Colonic mucosa (tissue), 4 donors: ENCODE measurements at regions of chr4 and their contacts with region 1.

Region 1: GRCh38 chr4:152849350-152849749 is 69.6 kb downstream of the ARFIP1 start:
- DNase-seq: no peak
- H3K4me3 ChIP-seq: no peak overlapping the region
- H3K27ac ChIP-seq: no peak overlapping the region
- H3K4me1 ChIP-seq: no peaks in the 10 kb centered on the region
- H3K27me3 ChIP-seq: no peaks in the 10 kb centered on the region
- CTCF ChIP-seq: no peak

Region 2: GRCh38 chr4:153127760-153128494 is 278.6 kb after region 1 on chr4:
- intact Hi-C with region 1: loop called (anchors 5 kb)
- DNase-seq: peak; percentile 93
- H3K4me3 ChIP-seq: no peak overlapping the region
- H3K27ac ChIP-seq: no peak overlapping the region
- H3K4me1 ChIP-seq: no peaks in the 10 kb centered on the region
- H3K27me3 ChIP-seq: no peaks in the 10 kb centered on the region
- CTCF ChIP-seq: peak; percentile 77